Endothelial cell of umbilical vein (primary cell): ENCODE measurements at regions of chr9 and their contacts with region 1.

Region 1: GRCh38 chr9:133238851-133239532 is 29.9 kb upstream of the OBP2B start:
- DNase-seq: peak; percentile 51
- H3K4me3 ChIP-seq: peak overlapping the region in 2 of 3 experiments; percentile 3 to 11
- H3K27ac ChIP-seq: peak overlapping the region; percentile 10
- H3K4me1 ChIP-seq: peaks cover 19% of the 10 kb centered on the region
- H3K27me3 ChIP-seq: peaks cover 2 to 6% of the 10 kb centered on the region in 2 experiments
- CTCF ChIP-seq: peak; percentile 85 to 92
- POLR2A ChIP-seq: no peak

Region 2: GRCh38 chr9:133327834-133328484 is 89.0 kb after region 1 on chr9:
- CTCF ChIA-PET with region 1: interaction called, 22 read pairs
- POLR2A ChIA-PET with region 1: no interaction called
- dilution Hi-C with region 1: no loop called
- intact Hi-C with region 1: loop called (anchors 2 kb)
- DNase-seq: no peak
- H3K4me3 ChIP-seq: no peak overlapping the region
- H3K27ac ChIP-seq: no peak overlapping the region
- H3K4me1 ChIP-seq: no peaks in the 10 kb centered on the region
- H3K27me3 ChIP-seq: no peaks in the 10 kb centered on the region
- CTCF ChIP-seq: no peak
- POLR2A ChIP-seq: no peak

Region 3: GRCh38 chr9:133759146-133759900 is 520.3 kb after region 1 on chr9:
- CTCF ChIA-PET with region 1: no interaction called
- POLR2A ChIA-PET with region 1: no interaction called
- dilution Hi-C with region 1: no loop called
- intact Hi-C with region 1: no loop called
- DNase-seq: no peak
- H3K4me3 ChIP-seq: no peak overlapping the region
- H3K27ac ChIP-seq: no peak overlapping the region
- H3K4me1 ChIP-seq: no peaks in the 10 kb centered on the region
- H3K27me3 ChIP-seq: no peaks in the 10 kb centered on the region
- CTCF ChIP-seq: no peak
- POLR2A ChIP-seq: no peak